Heart right ventricle (tissue), 16 donors: ENCODE measurements at regions of chr20 and their contacts with region 1.

Region 1: DNA sequence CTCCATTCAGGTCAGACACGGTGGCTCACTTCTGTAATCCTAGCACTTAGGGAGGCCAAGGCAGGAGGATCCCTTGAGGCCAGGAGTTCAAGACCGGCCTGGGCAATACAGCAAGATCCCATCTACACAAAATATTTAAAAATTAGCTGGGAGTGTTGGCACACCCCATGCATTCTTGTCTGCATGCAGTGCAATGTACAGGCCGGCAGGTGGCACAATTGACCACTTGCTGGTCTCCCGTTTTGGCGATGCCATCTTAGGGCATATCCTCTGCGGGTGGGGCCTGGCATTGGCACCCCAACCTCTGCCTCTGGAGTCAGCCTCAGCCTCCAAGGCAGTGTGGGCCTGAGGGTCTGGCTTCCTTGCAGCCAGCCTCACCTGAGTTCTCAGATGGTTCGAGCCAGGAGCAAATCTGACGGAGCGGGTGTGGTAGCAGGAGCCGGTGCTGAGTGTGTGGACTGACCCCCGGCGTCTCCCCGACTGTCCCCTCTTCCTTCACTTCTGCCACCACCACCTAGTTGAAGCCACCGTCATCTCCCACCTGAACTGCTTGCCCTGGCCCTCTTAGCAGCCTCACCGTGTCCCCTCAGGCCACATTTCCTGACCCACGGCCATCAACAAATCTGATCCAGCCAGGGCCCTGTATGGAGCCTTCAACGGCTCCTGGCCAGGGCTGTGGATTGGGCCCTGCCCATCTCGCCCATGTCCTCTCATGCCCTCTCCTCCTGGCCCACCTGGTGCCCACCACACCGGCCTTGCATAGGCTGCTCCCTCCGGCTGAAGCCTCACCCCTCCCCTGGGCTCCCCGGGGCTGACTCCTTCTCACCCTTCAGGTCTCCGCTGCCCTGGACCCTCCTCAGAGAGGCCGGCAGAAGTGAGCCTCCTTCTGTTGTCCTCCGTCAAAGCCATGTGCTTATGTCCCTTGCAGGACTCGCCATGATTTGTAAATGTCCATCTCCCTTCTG is 44.0 kb downstream of the EFCAB8 start:
- DNase-seq: peak; percentile 32 to 41
- ATAC-seq: peak in 6 of 8 donors; percentile 60 to 75 (median 66)
- H3K4me3 ChIP-seq: no peak overlapping the region
- H3K27ac ChIP-seq: no peak overlapping the region
- H3K4me1 ChIP-seq: no peaks in the 10 kb centered on the region
- H3K27me3 ChIP-seq: peaks cover 0 to 6% (median 0%) of the 10 kb centered on the region in 7 donors
- CTCF ChIP-seq: peak; percentile 77 to 93 (median 90)

Region 2: GRCh38 chr20:33005132-33005566 is 102.4 kb after region 1 on chr20:
- intact Hi-C with region 1: loop called in 1 of 10 experiments (anchors 10 kb)
- DNase-seq: no peak
- ATAC-seq: no peak
- H3K4me3 ChIP-seq: no peak overlapping the region
- H3K27ac ChIP-seq: no peak overlapping the region
- H3K4me1 ChIP-seq: no peaks in the 10 kb centered on the region
- H3K27me3 ChIP-seq: no peaks in the 10 kb centered on the region
- CTCF ChIP-seq: peak in 2 of 9 donors; percentile 36 to 52

Region 3: DNA sequence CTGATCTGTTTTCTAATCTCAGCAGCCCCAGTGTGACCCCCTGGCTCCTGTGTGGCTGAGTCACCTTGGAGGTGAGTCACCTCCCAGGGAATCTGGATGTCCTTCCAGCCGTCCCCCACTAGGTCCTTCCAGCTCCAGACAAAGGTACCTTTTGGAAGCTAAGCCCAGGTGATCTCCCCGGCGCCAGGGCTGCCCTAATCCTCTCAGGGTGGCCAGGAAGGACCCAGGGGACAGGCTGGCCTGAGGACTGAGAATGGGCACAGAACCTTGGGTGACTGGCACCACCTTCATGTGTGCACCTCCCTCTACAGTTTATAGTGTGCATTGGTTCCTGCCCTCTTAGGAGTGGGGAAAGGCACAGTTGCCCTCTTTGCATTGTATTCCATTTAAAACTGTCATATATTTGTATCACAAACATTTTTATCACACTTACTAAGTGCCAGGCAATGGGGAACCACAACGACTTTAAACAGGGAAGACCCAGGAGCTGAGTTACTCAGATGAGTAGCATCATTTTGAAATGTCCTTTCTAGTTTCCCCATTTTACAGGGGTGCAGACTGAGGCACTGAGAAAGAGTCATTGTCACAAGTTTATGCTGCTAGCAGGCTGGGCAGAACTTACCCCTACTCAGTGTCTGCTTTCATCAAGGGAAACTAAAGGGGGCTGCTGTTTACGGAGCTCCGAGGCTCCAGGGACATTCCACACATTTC is 174.1 kb after region 1 on chr20:
- intact Hi-C with region 1: loop called in 2 of 10 experiments (anchors 5 kb)
- DNase-seq: no peak
- ATAC-seq: no peak
- H3K4me3 ChIP-seq: no peak overlapping the region
- H3K27ac ChIP-seq: no peak overlapping the region
- H3K4me1 ChIP-seq: no peaks in the 10 kb centered on the region
- H3K27me3 ChIP-seq: peaks cover 0 to 22% (median 9%) of the 10 kb centered on the region in 7 donors
- CTCF ChIP-seq: peak in 4 of 9 donors; percentile 27 to 42 (median 32)

Region 4: DNA sequence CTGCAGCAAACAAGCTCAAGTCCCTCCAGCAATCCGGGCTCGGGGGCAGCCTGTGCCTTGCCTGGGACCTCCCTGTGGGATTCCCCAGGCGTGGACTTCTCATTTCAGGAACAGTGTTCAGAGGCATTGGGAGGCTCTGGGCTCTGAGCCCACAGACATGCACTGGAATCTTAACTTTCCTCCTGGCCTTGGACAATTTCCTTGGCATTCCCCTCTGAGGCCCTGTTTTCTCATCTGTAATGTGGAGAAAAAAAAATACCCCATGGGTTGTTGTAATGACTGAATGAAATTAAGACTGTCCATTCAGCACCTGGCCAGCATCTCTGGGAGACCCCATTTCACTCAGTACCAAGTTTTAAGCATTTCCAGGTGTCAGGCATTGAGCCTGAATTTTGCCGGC is 194.3 kb after region 1 on chr20:
- intact Hi-C with region 1: loop called in 9 of 10 experiments (anchors 2 to 5 kb)
- DNase-seq: no peak
- ATAC-seq: no peak
- H3K4me3 ChIP-seq: no peak overlapping the region
- H3K27ac ChIP-seq: no peak overlapping the region
- H3K4me1 ChIP-seq: no peaks in the 10 kb centered on the region
- H3K27me3 ChIP-seq: peaks cover 0 to 9% (median 0%) of the 10 kb centered on the region in 7 donors
- CTCF ChIP-seq: no peak

Region 5: DNA sequence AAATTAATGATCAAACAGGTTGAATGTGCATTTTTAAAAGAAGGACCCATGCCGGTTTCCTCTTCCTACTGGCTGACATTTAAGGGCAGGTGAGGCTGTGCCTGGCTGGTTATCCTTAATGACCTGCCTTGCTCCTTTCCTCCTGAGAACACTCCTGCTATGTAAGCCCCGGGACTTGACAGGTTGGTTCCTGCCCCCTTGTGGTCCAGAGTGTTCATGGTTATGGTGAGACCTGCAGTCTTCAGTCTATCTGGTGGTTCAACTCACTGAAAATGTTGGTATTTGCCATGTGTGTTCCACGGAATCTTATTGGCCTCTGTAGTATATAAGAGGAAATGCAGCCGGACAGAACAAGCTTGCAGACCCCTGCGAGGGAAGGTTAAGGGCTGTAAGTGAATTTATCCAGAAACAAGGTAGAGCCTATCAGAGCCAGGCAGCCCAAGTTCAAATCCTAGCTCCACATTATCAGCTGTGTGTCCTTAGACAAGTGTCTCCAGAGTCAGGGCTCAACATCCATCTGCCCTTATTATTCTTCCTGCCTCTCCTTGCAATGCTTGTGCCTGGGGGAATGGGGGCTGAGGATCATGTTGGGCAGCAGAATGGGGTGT is 309.2 kb after region 1 on chr20:
- intact Hi-C with region 1: loop called in 2 of 10 experiments (anchors 5 to 10 kb)
- DNase-seq: no peak
- ATAC-seq: no peak
- H3K4me3 ChIP-seq: no peak overlapping the region
- H3K27ac ChIP-seq: no peak overlapping the region
- H3K4me1 ChIP-seq: no peaks in the 10 kb centered on the region
- H3K27me3 ChIP-seq: peaks cover 0 to 47% (median 27%) of the 10 kb centered on the region in 7 donors
- CTCF ChIP-seq: peak in 6 of 9 donors; percentile 12 to 31 (median 19)

Region 6: GRCh38 chr20:33291830-33292355 is 389.2 kb after region 1 on chr20:
- intact Hi-C with region 1: loop called in 8 of 10 experiments (anchors 2 to 10 kb)
- DNase-seq: no peak
- ATAC-seq: no peak
- H3K4me3 ChIP-seq: no peak overlapping the region
- H3K27ac ChIP-seq: no peak overlapping the region
- H3K4me1 ChIP-seq: no peaks in the 10 kb centered on the region
- H3K27me3 ChIP-seq: peaks cover 0 to 67% (median 29%) of the 10 kb centered on the region in 7 donors
- CTCF ChIP-seq: peak; percentile 34 to 95 (median 70)

Region 7: DNA sequence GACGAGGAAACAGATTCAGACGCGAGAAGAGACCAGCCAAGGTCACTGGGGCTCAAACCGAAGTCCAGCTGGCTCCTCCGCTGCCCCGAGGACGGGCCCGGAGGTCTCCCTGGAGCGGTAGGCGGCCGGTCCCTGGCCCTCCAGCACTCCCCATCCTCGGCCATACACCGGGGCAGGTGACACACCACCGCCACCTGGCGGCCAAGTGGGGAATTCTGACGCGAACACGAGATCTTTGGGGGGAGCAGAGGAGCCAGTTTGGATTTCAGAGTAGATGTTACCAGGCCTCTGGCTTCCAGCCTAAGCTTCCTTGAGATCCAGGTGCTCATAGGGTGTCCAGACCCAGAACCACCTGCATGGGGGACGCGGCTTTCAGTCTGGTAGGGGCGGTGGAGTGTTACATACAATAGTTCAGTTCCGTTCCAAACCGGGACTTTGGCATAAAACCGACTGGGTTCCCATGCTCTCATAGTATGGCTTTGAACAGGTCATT is 396.4 kb after region 1 on chr20:
- intact Hi-C with region 1: loop called in 9 of 10 experiments (anchors 2 to 10 kb)
- DNase-seq: peak; percentile 44 to 68
- ATAC-seq: peak in 7 of 8 donors; percentile 42 to 76 (median 66)
- H3K4me3 ChIP-seq: no peak overlapping the region
- H3K27ac ChIP-seq: no peak overlapping the region
- H3K4me1 ChIP-seq: peaks cover 0 to 5% (median 0%) of the 10 kb centered on the region in 9 donors
- H3K27me3 ChIP-seq: peaks cover 0 to 24% (median 8%) of the 10 kb centered on the region in 7 donors
- CTCF ChIP-seq: peak; percentile 75 to 96 (median 87)

Region 8: GRCh38 chr20:33318096-33318429 is 415.3 kb after region 1 on chr20:
- intact Hi-C with region 1: no loop called
- DNase-seq: no peak
- ATAC-seq: no peak
- H3K4me3 ChIP-seq: no peak overlapping the region
- H3K27ac ChIP-seq: no peak overlapping the region
- H3K4me1 ChIP-seq: no peaks in the 10 kb centered on the region
- H3K27me3 ChIP-seq: peaks cover 0 to 45% (median 16%) of the 10 kb centered on the region in 7 donors
- CTCF ChIP-seq: no peak